Activated B cell treated with CpG ODN at 0.5 μM for 24 hours (primary cell): ENCODE measurements at regions of chr10 and their contacts with region 1.

Region 1: GRCh38 chr10:13758312-13758711 is 171.5 kb downstream of the PRPF18 start:
- DNase-seq: no peak
- ATAC-seq: no peak
- H3K4me3 Mint-ChIP-seq: no peak overlapping the region
- H3K27ac Mint-ChIP-seq: no peak overlapping the region
- H3K4me1 Mint-ChIP-seq: peaks cover 13% of the 10 kb centered on the region
- H3K27me3 Mint-ChIP-seq: no peaks in the 10 kb centered on the region
- CTCF ChIP-seq: no peak

Region 2: DNA sequence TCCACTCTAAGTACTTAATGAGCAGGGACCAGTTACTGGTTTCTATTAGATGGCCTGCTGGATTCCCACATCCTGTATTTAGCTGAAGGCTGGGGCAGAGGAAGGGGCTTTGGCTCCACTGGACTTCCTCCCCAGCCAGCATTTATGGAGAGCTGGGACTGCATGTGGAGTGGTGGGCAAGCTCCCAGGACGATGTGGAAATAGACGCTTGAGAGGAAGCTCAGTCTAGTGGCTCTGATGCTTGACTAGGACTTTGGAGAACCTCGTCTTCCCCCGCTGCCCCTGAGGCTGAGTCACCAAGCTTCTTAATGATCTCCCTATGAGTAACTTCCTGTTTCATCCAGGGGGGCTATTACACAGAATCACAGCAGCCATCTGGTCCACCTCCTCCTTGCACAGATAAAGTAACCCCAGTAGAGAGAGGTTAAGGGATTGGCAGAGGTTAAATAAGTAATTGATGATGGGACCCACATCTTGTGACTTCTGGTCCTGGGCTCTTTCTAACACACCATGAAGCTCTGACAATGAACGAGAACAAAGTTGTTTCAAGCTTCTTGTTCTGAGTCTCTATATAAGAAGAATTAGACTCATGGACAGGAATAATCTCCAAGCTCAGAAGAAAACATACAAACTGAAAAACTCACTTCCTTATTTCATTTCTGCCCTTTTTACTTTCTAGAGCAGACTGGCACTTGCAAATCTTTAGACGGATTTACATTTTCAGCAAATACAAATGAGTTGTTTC is 45.3 kb before region 1 on chr10:
- CTCF ChIA-PET with region 1: no interaction called
- POLR2A ChIA-PET with region 1: interaction called, 13 read pairs
- intact Hi-C with region 1: loop called (anchors 1 kb)
- DNase-seq: peak; percentile 47
- ATAC-seq: peak; percentile 90
- H3K4me3 Mint-ChIP-seq: peak overlapping the region; percentile 72
- H3K27ac Mint-ChIP-seq: peak overlapping the region; percentile 97
- H3K4me1 Mint-ChIP-seq: peaks cover 28% of the 10 kb centered on the region
- H3K27me3 Mint-ChIP-seq: no peaks in the 10 kb centered on the region
- CTCF ChIP-seq: no peak